PC-3 (cell line): ENCODE measurements at regions of chr3 and their contacts with region 1.

Region 1: DNA sequence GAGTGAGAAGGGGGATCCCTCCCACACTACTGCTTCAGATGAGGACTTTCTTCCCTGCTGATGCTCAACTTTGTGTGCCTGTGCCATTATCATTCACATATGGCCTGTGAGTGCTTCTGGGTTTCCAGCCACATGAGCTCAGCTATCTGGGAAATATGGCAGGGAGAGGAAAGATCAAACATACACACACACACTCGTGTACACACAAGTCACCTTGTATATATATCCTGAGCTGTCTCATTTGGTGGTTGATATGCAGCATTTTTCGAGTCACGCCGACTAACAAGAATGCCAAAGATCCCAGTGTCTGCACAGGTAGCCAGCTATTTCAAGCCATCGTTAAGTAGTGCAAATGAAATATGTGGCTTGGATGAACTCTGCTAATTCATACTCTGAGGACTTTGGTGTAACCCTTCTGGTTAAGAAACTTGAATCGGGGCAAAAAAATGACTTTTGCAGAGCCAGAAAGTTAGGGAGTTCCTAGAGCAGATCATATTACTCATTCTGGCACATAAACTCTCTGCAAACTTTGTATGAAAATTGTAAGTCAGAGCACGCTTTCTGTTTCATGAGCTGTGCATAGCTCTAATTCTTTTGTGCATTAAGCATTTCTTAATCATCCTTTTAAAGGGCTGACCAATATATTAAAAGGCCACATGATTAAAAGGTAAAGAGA is 24.9 kb upstream of the WNT5A start:
- DNase-seq: peak; percentile 78
- ATAC-seq: peak; percentile 90
- H3K4me3 ChIP-seq: peak overlapping the region; percentile 47
- H3K27ac ChIP-seq: peak overlapping the region; percentile 61
- H3K4me1 ChIP-seq: peaks cover 24% of the 10 kb centered on the region
- H3K27me3 ChIP-seq: no peaks in the 10 kb centered on the region
- CTCF ChIP-seq: no peak

Region 2: DNA sequence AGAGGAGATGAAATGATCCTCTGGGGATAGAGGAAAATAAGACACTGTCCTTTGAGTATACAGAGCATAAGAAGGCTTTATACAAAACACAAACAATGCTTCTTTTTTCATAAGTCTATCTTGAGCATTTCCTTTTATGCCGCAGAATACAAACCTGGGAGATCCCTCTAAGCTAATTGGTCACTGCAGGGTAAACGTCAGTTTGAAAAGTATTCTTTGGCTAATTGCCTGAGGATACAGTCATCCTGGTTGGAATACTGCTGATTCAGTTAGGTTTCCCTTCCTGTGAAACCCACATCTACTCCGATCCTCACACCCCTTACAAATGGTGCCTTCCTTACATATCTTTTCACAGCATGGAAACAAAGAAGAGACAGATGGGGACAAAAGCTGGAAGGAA is 35.5 kb before region 1 on chr3:
- CTCF ChIA-PET with region 1: interaction called, 12 read pairs
- POLR2A ChIA-PET with region 1: no interaction called
- intact Hi-C with region 1: no loop called
- DNase-seq: peak; percentile 62
- ATAC-seq: peak; percentile 37; the same call in 1 of the 2 replicates
- H3K4me3 ChIP-seq: no peak overlapping the region
- H3K27ac ChIP-seq: no peak overlapping the region
- H3K4me1 ChIP-seq: peaks cover 5% of the 10 kb centered on the region; the same call in 1 of the 2 replicates
- H3K27me3 ChIP-seq: no peaks in the 10 kb centered on the region
- CTCF ChIP-seq: no peak

Region 3: DNA sequence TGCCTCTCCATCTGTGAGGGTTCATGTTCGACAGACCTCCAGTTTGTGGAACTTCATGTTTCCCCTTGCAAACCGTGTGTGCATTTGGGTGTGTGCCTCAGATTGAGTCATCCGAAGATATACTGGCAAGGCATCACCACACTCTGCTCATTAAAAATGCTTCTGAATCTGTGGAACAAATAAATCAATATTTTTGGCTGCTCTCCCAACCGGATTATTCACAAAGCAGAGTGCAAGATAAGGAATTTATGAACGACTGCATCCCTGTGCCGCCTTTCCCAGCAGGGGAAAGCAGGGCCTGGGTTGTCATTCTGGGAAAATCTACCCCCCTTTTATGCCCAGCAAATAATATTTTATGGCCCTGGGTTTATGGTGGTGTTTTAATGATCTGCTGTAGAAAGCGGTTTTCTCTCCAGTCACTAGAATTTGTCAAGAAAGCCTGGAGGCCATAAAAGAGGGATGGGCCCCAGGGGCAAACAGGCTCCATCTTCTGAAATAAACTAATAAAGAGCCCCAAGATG is 20.7 kb before region 1 on chr3:
- CTCF ChIA-PET with region 1: interaction called, 4 read pairs
- POLR2A ChIA-PET with region 1: no interaction called
- intact Hi-C with region 1: loop called (anchors 1 kb)
- DNase-seq: peak; percentile 99
- ATAC-seq: peak; percentile 25
- H3K4me3 ChIP-seq: no peak overlapping the region; the same call in 1 of the 2 replicates
- H3K27ac ChIP-seq: peak overlapping the region; percentile 65
- H3K4me1 ChIP-seq: peaks cover 47% of the 10 kb centered on the region
- H3K27me3 ChIP-seq: no peaks in the 10 kb centered on the region
- CTCF ChIP-seq: no peak

Region 4: DNA sequence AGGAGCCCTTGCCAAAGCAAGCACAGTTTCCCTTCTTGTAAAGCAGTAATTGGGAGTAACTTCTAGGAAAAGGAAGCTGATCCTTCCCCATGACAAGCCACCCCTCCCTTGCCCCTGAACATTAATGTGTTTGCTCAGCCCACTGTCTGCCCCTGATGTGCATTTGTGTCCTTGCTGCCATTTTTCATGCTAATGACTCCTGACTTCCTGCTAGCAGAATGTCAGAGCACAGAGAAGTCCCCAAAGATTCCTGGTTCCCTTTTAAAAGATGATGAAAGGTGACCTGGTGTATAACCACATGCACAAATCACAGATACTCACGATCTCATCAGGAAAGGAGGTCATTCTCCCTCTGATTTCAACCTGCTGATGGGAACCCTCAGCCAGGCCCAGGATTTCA is 19.3 kb after region 1 on chr3:
- CTCF ChIA-PET with region 1: interaction called, 15 read pairs
- POLR2A ChIA-PET with region 1: no interaction called
- intact Hi-C with region 1: no loop called
- DNase-seq: no peak
- ATAC-seq: no peak
- H3K4me3 ChIP-seq: no peak overlapping the region
- H3K27ac ChIP-seq: no peak overlapping the region
- H3K4me1 ChIP-seq: peaks cover 16% of the 10 kb centered on the region
- H3K27me3 ChIP-seq: no peaks in the 10 kb centered on the region
- CTCF ChIP-seq: no peak

Region 5: GRCh38 chr3:55755516-55756205 is 243.6 kb after region 1 on chr3:
- CTCF ChIA-PET with region 1: no interaction called
- POLR2A ChIA-PET with region 1: no interaction called
- intact Hi-C with region 1: no loop called
- DNase-seq: no peak
- ATAC-seq: no peak
- H3K4me3 ChIP-seq: no peak overlapping the region
- H3K27ac ChIP-seq: no peak overlapping the region
- H3K4me1 ChIP-seq: peaks cover 14% of the 10 kb centered on the region
- H3K27me3 ChIP-seq: no peaks in the 10 kb centered on the region
- CTCF ChIP-seq: no peak

Region 6: GRCh38 chr3:55923626-55924025 is 411.6 kb after region 1 on chr3:
- CTCF ChIA-PET with region 1: no interaction called
- POLR2A ChIA-PET with region 1: no interaction called
- intact Hi-C with region 1: no loop called
- DNase-seq: no peak
- ATAC-seq: no peak
- H3K4me3 ChIP-seq: no peak overlapping the region
- H3K27ac ChIP-seq: no peak overlapping the region
- H3K4me1 ChIP-seq: no peaks in the 10 kb centered on the region
- H3K27me3 ChIP-seq: peaks cover 27% of the 10 kb centered on the region; the same call in 1 of the 2 replicates
- CTCF ChIP-seq: no peak